Heart right ventricle (tissue), 16 donors: ENCODE measurements at regions of chr22 and their contacts with region 1.

Region 1: GRCh38 chr22:24244101-24244787 is 638 bp downstream of the GGT5 start:
- DNase-seq: no peak
- ATAC-seq: peak in 5 of 8 donors; percentile 26 to 40 (median 34)
- H3K4me3 ChIP-seq: peak overlapping the region; percentile 11 to 51 (median 44)
- H3K27ac ChIP-seq: peak overlapping the region; percentile 75 to 94 (median 84)
- H3K4me1 ChIP-seq: peaks cover 14 to 66% (median 58%) of the 10 kb centered on the region in 9 donors
- H3K27me3 ChIP-seq: no peaks in the 10 kb centered on the region
- CTCF ChIP-seq: no peak

Region 2: DNA sequence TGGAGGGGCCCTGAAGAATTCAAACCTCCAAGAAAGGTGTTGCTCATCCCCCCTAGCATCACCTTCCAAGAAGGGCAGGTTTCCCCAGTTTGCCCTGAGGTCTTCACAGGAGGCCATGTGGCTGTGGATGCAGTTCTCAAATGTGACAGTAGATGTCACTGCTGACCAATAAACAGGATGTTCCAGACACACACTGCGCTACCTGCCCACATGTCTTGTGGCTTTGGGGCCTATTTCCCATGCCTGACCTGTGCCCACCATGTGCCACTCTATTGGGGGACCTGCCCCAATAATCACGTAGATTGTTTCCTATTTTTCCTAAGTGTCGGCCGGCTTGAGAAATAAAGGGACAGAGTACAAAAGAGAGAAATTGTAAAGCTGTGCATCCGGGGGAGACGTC is 259.8 kb before region 1 on chr22:
- intact Hi-C with region 1: loop called in 1 of 10 experiments (anchors 10 kb)
- DNase-seq: no peak
- ATAC-seq: peak in 4 of 8 donors; percentile 16 to 65 (median 36)
- H3K4me3 ChIP-seq: no peak overlapping the region
- H3K27ac ChIP-seq: no peak overlapping the region
- H3K4me1 ChIP-seq: no peaks in the 10 kb centered on the region
- H3K27me3 ChIP-seq: no peaks in the 10 kb centered on the region
- CTCF ChIP-seq: peak in 6 of 9 donors; percentile 50 to 82 (median 58)

Region 3: DNA sequence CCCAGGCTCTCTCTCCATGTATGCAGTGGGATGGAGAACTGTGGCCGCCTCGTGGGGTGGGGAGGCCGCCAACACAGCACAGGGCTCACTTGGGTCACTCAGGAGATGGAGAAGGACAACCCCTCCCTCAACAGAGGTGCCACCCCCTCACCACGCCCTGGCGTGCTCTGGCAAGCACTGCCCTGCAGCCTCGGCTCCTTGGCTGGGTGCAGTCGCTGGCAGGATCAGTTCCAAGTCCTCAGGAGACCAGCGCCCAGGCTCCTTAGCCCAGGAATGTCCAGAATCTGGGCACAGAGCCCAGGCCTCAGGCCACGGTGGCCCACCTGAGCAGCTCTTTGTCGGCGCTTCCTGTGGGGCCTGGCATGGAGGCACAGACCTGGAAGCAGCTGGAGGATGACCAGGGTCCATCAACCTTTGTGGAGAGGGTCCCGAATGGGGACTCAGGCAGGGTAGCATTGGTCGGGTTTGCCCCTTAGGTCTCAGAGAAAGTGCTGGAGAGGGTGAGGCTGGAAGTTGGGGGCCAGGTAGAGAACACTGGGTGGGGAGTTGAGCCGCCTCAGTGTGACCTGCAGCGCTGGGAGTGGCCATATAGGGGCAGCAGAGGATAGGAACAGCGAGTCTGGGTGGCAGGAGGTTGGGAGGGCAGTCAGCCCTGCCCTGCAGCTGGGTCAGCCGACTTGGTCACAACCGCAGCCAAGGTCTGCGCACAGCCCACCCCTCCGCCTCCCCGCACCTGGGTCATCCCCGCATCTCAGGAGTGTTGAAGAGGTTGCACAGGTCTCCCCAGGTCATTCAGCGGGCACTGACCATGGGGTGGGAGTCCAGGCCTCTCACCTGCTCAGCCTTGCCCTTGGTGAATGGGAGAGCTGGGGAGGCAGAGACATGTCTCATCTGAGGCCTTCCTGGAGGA is 54.7 kb before region 1 on chr22:
- intact Hi-C with region 1: loop called (anchors 1 to 5 kb)
- DNase-seq: peak; percentile 73 to 76
- ATAC-seq: peak; percentile 83 to 95 (median 88)
- H3K4me3 ChIP-seq: no peak overlapping the region
- H3K27ac ChIP-seq: peak overlapping the region in 2 of 10 donors; percentile 1 to 36
- H3K4me1 ChIP-seq: peaks cover 0 to 17% (median 12%) of the 10 kb centered on the region in 9 donors
- H3K27me3 ChIP-seq: no peaks in the 10 kb centered on the region
- CTCF ChIP-seq: peak; percentile 87 to 95 (median 91)

Region 4: DNA sequence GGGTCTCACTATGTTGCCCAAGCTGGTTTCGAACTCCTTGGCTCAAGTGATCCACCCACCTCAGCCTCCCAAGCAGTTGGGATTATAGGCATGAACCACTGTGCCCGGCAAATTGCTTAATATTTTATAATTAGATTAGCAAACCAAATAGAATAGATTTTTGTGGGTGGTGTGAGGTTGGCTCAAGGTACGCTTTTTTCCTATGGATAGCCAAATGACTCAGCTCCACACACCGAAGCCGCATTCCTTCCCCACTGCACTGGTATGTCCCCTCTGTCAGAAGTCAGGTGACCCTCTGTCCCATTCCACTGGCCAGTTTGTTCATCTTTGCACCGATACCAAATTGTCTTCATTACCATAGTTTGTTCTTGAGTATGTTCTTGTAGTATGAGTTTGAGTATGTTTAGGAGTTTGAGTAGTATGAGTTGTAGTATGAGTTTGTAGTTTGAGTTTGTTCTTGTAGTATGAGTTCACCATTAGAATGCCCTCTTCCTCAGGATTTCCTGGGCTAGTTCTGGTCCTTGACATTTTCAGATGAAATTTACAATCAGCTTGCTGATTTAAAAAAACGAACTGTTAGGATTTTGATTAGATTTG is 43.5 kb before region 1 on chr22:
- intact Hi-C with region 1: loop called in 4 of 10 experiments (anchors 5 kb)
- DNase-seq: no peak
- ATAC-seq: no peak
- H3K4me3 ChIP-seq: no peak overlapping the region
- H3K27ac ChIP-seq: no peak overlapping the region
- H3K4me1 ChIP-seq: peaks cover 0 to 33% (median 5%) of the 10 kb centered on the region in 9 donors
- H3K27me3 ChIP-seq: no peaks in the 10 kb centered on the region
- CTCF ChIP-seq: no peak

Region 5: DNA sequence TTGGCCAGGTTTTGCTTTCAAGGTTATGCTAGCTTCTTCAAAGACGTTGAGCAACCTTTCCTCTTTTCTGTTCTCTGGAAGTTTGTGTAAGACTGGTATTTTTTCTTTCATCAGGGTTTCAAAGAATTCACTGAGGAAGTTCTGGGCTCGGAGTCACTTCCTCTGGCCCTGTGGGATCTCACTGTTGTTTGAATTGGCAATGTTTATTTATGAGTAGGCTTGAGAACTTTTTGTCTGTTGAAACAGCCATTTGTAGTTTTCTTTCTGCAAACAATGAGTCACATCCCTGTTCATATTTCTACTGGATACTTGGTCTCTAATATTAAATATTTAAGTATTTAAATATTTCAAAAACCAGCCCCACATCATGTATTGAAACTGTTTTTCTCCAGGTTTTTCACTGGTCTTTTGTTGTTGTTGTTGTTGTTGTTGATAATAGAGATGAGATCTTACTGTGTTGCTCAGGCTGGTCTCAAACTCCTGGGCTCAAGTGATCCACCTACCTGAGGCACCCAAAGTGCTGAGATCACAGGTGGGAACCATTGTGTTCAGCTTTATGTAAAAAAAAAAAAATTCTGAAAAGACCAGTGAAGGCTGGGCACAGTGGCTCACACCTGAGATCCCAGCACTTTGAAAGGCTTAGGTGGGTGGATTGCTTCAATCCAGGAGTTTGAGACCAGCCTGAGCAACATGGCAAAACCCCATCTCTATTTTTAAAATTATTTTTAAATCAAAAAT is 36.1 kb before region 1 on chr22:
- intact Hi-C with region 1: loop called in 4 of 10 experiments (anchors 5 kb)
- DNase-seq: peak in 1 of 2 donors; percentile 74
- ATAC-seq: peak; percentile 89 to 95 (median 92)
- H3K4me3 ChIP-seq: peak overlapping the region in 1 of 10 donors; percentile 11
- H3K27ac ChIP-seq: peak overlapping the region; percentile 60 to 94 (median 85)
- H3K4me1 ChIP-seq: peaks cover 6 to 46% (median 26%) of the 10 kb centered on the region in 9 donors
- H3K27me3 ChIP-seq: no peaks in the 10 kb centered on the region
- CTCF ChIP-seq: no peak